ENCODE measurements at regions of chr16 and their contacts with region 1.

Region 1: GRCh38 chr16:70770626-70771552 is 30.1 kb downstream of the VAC14 start:
- DNase-seq: peak; percentile 62
- H3K4me3 ChIP-seq: no peak overlapping the region
- H3K27ac ChIP-seq: no peak overlapping the region
- H3K4me1 ChIP-seq: no peaks in the 10 kb centered on the region
- H3K27me3 ChIP-seq: no peaks in the 10 kb centered on the region
- CTCF ChIP-seq: peak; percentile 90 to 98 (median 94)
- EP300 ChIP-seq: no peak
- POLR2A ChIP-seq: no peak

Region 2: DNA sequence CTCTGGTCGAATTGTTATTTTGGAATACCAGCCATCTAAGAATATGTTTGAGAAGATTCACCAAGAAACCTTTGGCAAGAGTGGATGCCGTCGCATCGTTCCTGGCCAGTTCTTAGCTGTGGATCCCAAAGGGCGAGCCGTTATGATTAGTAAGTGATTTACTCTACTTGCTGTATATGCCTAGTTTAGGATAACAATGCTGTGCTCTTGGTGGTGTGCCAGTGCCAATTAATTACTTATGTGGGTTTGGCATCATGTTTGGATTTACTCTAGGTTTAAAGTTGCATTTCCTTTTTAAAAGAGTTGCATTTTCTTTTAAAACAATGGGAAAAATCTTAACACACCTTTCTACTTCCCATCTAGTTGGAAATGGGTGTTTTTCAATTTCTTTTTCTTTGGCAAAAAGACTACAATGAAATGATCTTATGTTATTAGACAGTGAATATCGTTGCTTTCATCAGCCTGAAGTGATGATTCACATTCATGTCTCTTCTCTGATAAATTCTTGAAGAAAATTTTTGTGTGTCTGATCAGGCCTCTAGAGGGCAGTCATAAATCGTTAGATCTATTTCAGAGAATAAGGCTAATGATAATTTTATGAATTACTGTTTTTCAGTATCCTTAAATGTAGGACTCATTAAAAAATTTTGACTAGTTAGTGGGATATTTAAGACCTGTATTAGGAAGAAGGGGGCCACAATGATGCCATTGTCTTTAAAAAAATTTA is 241.7 kb before region 1 on chr16:
- in situ Hi-C with region 1: loop called in 1 of 4 experiments (anchors 25 kb)
- intact Hi-C with region 1: no loop called
- DNase-seq: no peak
- H3K4me3 ChIP-seq: no peak overlapping the region
- H3K27ac ChIP-seq: no peak overlapping the region
- H3K4me1 ChIP-seq: peaks cover 8 to 40% (median 25%) of the 10 kb centered on the region in 4 donors
- H3K27me3 ChIP-seq: no peaks in the 10 kb centered on the region
- CTCF ChIP-seq: peak; percentile 37 to 46 (median 42)
- EP300 ChIP-seq: no peak
- POLR2A ChIP-seq: no peak

Region 3: GRCh38 chr16:70679666-70680494 is 91.0 kb before region 1 on chr16:
- in situ Hi-C with region 1: loop called in 3 of 4 experiments (anchors 10 kb)
- intact Hi-C with region 1: no loop called
- DNase-seq: no peak
- H3K4me3 ChIP-seq: no peak overlapping the region
- H3K27ac ChIP-seq: peak overlapping the region; percentile 80 to 91 (median 89)
- H3K4me1 ChIP-seq: peaks cover 33 to 49% (median 40%) of the 10 kb centered on the region in 4 donors
- H3K27me3 ChIP-seq: no peaks in the 10 kb centered on the region
- CTCF ChIP-seq: peak in 4 of 5 experiments; percentile 8 to 64 (median 51)
- EP300 ChIP-seq: no peak
- POLR2A ChIP-seq: no peak

Region 4: DNA sequence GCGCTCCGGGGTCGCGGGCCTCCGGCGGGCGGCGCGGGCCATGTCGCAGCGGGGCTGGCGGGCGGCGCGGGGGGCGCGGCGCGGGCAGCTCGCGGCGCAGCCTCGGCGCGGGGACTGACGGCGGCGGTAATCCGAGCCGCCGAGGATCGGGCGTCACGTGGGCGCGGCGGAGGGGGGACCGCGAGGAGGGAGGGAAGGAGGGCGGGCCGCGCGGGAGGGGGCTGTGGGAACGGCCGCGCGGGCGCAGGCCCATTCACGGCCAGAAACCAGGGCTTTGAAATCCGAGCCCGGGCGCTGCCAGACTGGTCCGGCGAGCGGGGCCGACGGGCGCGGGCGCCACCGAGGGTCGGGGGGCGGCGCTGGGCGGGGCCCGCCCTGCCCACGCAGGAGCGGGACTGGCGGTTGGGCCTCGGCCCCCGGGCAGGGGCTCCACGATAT is 84.9 kb before region 1 on chr16 and contains the start of gene MTSS2:
- in situ Hi-C with region 1: loop called in 1 of 4 experiments (anchors 10 kb)
- intact Hi-C with region 1: no loop called
- DNase-seq: peak; percentile 77
- H3K4me3 ChIP-seq: peak within 1 kb of the TSS; percentile 57 to 61 (median 58)
- H3K27ac ChIP-seq: peak within 1 kb of the TSS; percentile 87 to 95 (median 91)
- H3K4me1 ChIP-seq: peaks cover 59 to 93% (median 81%) of the 10 kb centered on the region in 4 donors
- H3K27me3 ChIP-seq: peaks cover 6% of the 10 kb centered on the region
- CTCF ChIP-seq: no peak
- EP300 ChIP-seq: no peak
- POLR2A ChIP-seq: no peak
- total RNA-seq, gene MTSS2: 13.9 to 149 (median 33.8) TPM

Region 5: DNA sequence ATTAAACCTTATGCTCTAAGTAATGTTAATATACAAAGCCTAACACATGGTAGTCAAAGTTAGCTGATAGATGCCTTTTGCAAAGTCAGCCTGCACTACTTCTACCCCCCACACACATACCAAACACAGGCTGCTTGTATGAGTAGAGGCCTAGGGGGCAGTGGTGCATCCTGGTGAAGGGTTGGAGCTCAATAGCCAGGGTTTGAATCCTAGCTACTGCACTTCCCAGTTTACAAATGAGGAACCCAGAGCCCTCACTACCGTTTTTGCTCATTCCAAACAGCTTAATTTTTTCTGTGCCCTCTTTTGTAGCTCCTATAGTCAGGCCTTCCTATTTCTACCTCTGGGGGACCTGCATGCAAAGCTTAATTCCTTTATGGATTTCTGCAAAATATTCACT is 478.5 kb after region 1 on chr16:
- in situ Hi-C with region 1: no loop called
- intact Hi-C with region 1: no loop called
- DNase-seq: no peak
- H3K4me3 ChIP-seq: no peak overlapping the region
- H3K27ac ChIP-seq: no peak overlapping the region
- H3K4me1 ChIP-seq: no peaks in the 10 kb centered on the region
- H3K27me3 ChIP-seq: no peaks in the 10 kb centered on the region
- CTCF ChIP-seq: no peak
- EP300 ChIP-seq: no peak
- POLR2A ChIP-seq: no peak